Right cardiac atrium (tissue), 5 donors: ENCODE measurements at regions of chr9 and their contacts with region 1.

Region 1: GRCh38 chr9:112104901-112105300 is 70.2 kb downstream of the SUSD1 start:
- DNase-seq: no peak
- ATAC-seq: no peak
- H3K4me3 ChIP-seq: no peak overlapping the region
- H3K27ac ChIP-seq: no peak overlapping the region
- H3K4me1 ChIP-seq: no peaks in the 10 kb centered on the region
- H3K27me3 ChIP-seq: no peaks in the 10 kb centered on the region

Region 2: DNA sequence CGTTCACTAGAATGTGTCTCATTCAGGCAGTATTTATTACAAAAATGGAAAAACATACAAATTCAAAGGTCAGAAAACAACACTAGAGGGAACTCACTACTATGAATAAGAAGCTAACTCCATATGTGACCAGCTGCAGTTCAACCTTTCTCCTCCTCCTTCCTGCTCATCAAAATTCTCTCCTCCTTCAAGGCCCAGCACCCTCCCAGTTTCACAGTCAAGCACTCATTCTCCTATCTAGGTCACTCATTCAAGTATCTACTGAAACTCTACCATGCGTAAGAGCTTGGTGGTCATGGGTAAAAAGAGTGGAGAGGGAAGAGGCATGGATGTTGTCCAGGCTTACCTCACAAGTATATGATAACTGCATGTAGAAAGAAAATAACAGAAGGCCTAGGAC is 648.4 kb before region 1 on chr9:
- intact Hi-C with region 1: loop called in 1 of 4 experiments (anchors 10 kb)
- DNase-seq: no peak
- ATAC-seq: peak; percentile 38 to 45
- H3K4me3 ChIP-seq: no peak overlapping the region
- H3K27ac ChIP-seq: no peak overlapping the region
- H3K4me1 ChIP-seq: peaks cover 9% of the 10 kb centered on the region
- H3K27me3 ChIP-seq: no peaks in the 10 kb centered on the region

Region 3: DNA sequence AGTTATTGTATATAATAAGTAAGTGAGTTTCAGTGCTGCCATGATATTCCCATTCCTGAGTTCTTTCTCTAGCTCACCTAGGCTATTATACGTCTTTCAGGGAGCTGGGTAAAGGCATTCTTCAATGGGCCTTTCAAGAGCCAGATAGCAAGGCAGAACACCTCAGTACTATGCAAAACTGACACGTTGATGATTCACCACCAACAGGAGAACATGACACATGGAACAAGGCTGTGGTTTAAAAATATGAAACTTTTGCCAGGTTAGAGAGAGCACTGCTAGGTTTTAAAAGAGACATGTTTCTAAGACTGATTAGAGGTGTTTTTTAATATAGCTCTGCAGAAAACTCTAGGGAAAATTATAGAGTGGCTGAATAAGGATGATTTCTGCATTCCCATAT is 112.4 kb before region 1 on chr9:
- intact Hi-C with region 1: no loop called
- DNase-seq: no peak
- ATAC-seq: no peak
- H3K4me3 ChIP-seq: no peak overlapping the region
- H3K27ac ChIP-seq: no peak overlapping the region
- H3K4me1 ChIP-seq: no peaks in the 10 kb centered on the region
- H3K27me3 ChIP-seq: no peaks in the 10 kb centered on the region